GM10248 (cell line): ENCODE measurements at regions of chr15 and their contacts with region 1.

Region 1: DNA sequence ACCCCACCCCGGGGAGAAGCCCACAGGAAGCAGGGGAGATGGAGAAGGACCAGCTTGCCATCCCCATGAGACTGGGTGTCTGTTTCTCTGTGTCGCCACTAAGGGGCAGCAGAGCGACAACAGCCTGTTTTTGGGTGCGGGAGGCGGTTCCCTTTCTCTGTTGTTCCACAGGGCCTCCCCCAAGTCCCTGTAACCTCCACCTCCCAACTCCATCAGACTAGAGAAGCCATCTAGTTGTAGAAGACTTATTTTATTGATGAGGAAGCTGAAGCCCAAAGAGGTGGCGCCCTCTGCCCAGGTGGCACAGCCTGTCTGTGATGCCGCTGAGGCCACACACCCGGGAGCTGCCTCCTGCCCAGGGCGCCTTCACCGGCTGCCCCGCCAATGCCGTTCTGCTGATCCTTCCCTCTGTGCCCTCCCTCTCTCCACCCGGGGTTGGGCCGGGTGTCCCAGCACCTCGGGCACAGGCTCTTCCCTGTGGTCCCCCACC is 3.9 kb upstream of the CCDC9B start:
- DNase-seq: peak; percentile 88
- CTCF ChIP-seq: peak; percentile 89

Region 2: DNA sequence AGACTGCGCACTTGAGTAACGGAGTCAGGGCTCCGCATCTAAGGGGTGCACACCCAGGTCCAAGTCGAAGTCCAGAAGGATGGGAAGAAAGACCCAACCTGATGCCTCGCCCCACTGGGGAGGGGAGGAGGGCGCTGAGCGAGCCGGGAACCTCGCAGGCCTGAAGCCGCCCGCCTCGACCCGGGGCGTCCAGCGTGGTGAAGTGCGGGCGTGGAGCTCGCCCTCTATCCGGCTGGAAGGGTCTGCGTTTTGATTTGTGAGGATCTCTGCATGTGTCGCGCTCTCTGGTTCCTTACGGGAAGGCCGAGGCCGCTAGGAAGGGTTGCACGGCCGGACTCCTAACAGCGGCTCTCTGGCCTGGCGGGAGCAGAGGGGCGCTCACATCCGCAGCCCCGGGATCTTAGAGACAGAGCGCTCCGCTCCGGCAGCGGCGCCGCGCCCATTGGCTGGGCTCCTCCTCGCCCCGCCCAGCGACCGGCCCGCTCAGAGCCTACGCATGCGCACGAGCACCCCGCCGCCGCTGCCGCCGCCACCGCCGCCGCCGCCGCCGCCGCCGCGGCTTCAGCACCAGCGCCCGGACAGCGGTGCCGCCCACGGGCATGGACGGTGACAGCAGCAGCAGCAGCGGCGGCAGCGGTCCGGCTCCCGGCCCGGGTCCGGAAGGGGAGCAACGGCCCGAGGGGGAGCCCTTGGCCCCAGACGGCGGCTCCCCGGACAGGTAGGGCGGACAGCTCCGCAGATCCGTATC is 13.2 kb after region 1 on chr15 and contains the start of gene DISP2:
- CTCF ChIA-PET with region 1: interaction called, 186 read pairs
- POLR2A ChIA-PET with region 1: no interaction called
- DNase-seq: peak; percentile 99
- CTCF ChIP-seq: no peak

Region 3: GRCh38 chr15:40398413-40398873 is 53.8 kb after region 1 on chr15:
- CTCF ChIA-PET with region 1: interaction called, 53 read pairs
- POLR2A ChIA-PET with region 1: no interaction called
- DNase-seq: peak; percentile 48
- CTCF ChIP-seq: no peak

Region 4: GRCh38 chr15:40405501-40406381 is 61.1 kb after region 1 on chr15 and contains the start of gene IVD:
- CTCF ChIA-PET with region 1: interaction called, 53 read pairs
- POLR2A ChIA-PET with region 1: no interaction called
- DNase-seq: peak; percentile 95
- CTCF ChIP-seq: no peak

Region 5: DNA sequence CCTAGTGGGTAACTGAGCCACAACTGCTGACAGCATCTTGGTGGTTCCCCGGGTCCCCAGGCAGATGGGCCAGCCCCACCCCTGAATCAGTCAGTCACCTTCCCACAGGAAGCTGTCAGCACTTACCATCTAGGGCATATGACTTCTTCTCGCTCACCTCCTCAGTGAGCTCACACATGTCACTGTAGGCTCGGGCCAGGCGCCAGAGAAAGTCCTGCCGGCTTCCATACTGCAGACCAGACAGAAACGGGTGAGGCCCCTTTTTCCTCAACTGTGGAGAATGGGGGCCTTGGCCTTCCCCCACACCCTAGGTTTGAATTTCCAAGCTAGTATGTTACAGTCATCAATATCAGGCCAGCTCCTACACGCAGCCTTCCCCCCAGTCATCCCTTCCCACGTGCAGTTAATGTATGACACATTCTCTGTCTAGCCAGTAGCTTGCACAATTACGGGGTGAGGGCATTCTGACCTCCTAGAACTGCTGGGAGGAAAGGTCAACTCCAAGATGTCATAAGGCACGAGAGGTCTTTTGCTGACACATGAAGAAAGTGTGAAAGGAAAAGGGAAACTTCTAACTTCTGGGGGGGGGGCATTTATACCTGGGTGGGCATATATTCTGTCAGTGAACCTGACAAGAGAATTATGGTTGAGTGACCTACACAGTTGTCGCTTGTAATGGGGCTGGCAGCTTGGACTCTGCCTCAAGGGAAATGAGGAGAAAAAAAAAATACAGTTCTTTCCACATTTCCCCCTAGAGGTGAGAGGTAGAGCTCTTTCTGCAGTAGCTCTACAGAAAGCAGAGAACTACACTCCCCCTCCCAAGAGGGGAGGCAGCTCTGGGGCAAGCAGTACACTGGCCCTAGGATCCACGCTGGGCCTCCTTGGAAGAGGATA is 399.5 kb after region 1 on chr15:
- CTCF ChIA-PET with region 1: no interaction called
- POLR2A ChIA-PET with region 1: no interaction called
- DNase-seq: no peak
- CTCF ChIP-seq: no peak